ENCODE measurements at regions of chr13 and their contacts with region 1.

Region 1: GRCh38 chr13:98411681-98412201 is 165.2 kb downstream of the STK24 start:
- DNase-seq: peak in 1 of 2 experiments; percentile 16
- H3K4me3 ChIP-seq: no peak overlapping the region
- H3K4me3 Mint-ChIP-seq: no peak overlapping the region
- H3K27ac Mint-ChIP-seq: no peak overlapping the region
- H3K4me1 ChIP-seq: peaks cover 19% of the 10 kb centered on the region
- H3K4me1 Mint-ChIP-seq: peaks cover 14% of the 10 kb centered on the region
- H3K27me3 ChIP-seq: no peaks in the 10 kb centered on the region
- H3K27me3 Mint-ChIP-seq: no peaks in the 10 kb centered on the region
- CTCF ChIP-seq: no peak

Region 2: DNA sequence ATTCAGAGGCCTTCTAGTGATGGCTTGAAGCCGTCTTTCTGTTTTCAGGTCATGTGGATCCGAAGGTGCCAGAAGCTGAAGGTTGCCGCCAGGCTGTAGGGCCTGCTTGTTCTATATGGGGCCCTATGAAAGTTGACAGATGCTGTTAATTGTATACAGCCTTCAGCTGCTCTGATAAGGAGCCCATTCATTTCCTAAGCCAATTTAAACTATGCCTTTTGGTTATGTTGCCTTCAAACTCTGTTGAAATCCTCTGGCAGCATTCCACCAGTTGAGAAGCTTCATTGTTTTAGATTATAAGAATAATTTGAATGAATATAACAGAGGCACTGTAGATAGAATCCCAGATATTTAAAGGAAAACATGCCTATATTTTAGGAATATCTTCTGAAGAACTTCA is 943.4 kb before region 1 on chr13:
- CTCF ChIA-PET with region 1: no interaction called
- POLR2A ChIA-PET with region 1: no interaction called
- intact Hi-C with region 1: no loop called
- DNase-seq: no peak
- H3K4me3 ChIP-seq: no peak overlapping the region
- H3K4me3 Mint-ChIP-seq: no peak overlapping the region
- H3K27ac Mint-ChIP-seq: no peak overlapping the region
- H3K4me1 ChIP-seq: no peaks in the 10 kb centered on the region
- H3K4me1 Mint-ChIP-seq: no peaks in the 10 kb centered on the region
- H3K27me3 ChIP-seq: no peaks in the 10 kb centered on the region
- H3K27me3 Mint-ChIP-seq: no peaks in the 10 kb centered on the region
- CTCF ChIP-seq: no peak

Region 3: DNA sequence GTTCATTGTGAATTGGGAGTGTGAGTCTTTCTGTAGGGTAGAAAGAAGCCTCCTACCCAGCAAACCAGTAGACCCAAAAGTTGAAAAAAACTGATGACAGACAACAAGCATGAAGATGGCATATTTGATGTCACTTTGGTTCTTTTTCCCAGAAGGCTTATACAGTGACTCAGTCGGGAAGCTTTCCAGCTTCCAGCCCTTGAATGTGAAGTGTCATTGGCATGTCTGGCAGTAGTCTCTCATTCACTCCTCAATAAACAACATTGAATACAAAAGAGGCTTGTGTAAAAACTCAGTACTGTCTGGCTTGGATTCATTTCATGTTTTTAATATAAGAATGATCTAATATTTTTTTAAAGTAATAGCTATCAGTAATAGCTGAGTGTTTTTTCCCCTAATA is 389.5 kb before region 1 on chr13:
- CTCF ChIA-PET with region 1: no interaction called
- POLR2A ChIA-PET with region 1: no interaction called
- intact Hi-C with region 1: loop called (anchors 10 kb)
- DNase-seq: no peak
- H3K4me3 ChIP-seq: no peak overlapping the region
- H3K4me3 Mint-ChIP-seq: no peak overlapping the region
- H3K27ac Mint-ChIP-seq: no peak overlapping the region
- H3K4me1 ChIP-seq: no peaks in the 10 kb centered on the region
- H3K4me1 Mint-ChIP-seq: no peaks in the 10 kb centered on the region
- H3K27me3 ChIP-seq: no peaks in the 10 kb centered on the region
- H3K27me3 Mint-ChIP-seq: no peaks in the 10 kb centered on the region
- CTCF ChIP-seq: no peak

Region 4: DNA sequence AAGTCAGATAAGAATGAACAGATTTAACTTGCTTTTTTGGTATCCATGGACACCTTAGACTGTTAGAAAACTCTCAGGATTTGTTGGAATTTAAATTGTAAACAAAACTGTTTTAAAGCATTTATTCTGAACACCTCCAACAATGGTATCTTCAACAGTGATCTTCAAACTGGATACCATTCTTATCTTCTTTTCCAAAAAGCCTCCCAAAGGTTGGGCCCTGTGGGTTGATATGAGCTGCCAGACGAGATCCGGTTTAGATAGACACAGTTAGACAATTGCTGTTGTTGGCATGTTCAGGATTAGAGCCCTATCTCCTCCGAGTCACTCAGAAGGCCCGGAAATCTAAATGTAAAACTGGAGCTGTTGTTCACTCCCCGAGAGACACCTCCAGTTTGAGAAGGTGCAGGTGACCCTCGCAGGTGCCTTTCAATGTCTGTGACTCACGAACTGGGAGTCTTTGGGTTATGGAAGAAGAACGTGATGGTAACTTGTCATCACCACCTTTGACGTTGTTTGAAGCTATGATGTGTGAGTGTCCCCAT is 91.1 kb before region 1 on chr13:
- CTCF ChIA-PET with region 1: no interaction called
- POLR2A ChIA-PET with region 1: no interaction called
- intact Hi-C with region 1: loop called (anchors 1 kb)
- DNase-seq: peak; percentile 76 to 80
- H3K4me3 ChIP-seq: no peak overlapping the region
- H3K4me3 Mint-ChIP-seq: peak overlapping the region; percentile 2
- H3K27ac Mint-ChIP-seq: peak overlapping the region; percentile 74
- H3K4me1 ChIP-seq: peaks cover 21% of the 10 kb centered on the region
- H3K4me1 Mint-ChIP-seq: peaks cover 36% of the 10 kb centered on the region
- H3K27me3 ChIP-seq: no peaks in the 10 kb centered on the region
- H3K27me3 Mint-ChIP-seq: no peaks in the 10 kb centered on the region
- CTCF ChIP-seq: no peak

Region 5: DNA sequence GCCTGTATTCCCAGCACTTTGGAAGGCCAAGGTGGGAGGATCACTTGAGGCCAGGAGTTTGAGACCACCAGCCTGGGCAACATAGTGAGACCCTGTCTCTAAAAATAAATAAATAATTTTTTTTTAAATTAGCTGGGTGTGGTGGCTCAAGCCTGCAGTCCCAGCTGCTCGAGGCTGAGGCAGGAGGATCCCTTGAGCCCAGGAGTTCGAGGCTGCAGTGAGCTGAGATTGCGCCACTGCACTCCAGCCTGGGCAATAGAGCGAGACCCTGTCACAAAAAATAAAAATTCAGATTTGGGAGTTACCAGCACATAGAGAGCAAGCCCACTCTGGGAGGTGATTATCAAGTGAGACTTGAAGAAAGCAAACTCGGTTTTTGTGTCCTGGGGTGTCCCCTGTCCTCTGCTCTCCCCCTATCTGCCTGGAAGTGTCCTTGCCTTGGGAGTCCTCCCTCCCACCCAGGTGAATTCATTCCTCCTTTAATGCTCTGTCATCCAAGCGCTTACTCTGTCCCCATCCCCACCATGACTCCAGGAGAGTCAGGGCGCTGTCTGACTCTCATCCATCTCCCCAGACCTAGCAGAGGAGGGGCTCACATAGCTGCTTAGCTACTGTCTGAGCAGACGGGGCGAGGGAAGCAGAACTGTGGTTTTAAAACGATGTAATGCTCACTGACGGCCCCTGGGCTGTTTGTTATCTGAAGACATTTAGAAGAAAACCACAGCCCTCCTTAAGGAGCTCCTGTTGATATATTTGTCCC is 18.4 kb after region 1 on chr13:
- CTCF ChIA-PET with region 1: no interaction called
- POLR2A ChIA-PET with region 1: interaction called, 3 read pairs
- intact Hi-C with region 1: loop called (anchors 1 kb)
- DNase-seq: no peak
- H3K4me3 ChIP-seq: no peak overlapping the region
- H3K4me3 Mint-ChIP-seq: no peak overlapping the region
- H3K27ac Mint-ChIP-seq: no peak overlapping the region
- H3K4me1 ChIP-seq: no peaks in the 10 kb centered on the region
- H3K4me1 Mint-ChIP-seq: no peaks in the 10 kb centered on the region
- H3K27me3 ChIP-seq: no peaks in the 10 kb centered on the region
- H3K27me3 Mint-ChIP-seq: no peaks in the 10 kb centered on the region
- CTCF ChIP-seq: no peak